Dorsolateral prefrontal cortex (tissue), 120 donors: ENCODE measurements at regions of chr1 and their contacts with region 1.

Region 1: GRCh38 chr1:150372580-150372979 is 8.6 kb downstream of the RPRD2 start:
- DNase-seq: no peak
- H3K4me3 ChIP-seq: no peak overlapping the region
- H3K27ac ChIP-seq: no peak overlapping the region
- H3K27me3 ChIP-seq: no peaks in the 10 kb centered on the region
- CTCF ChIP-seq: no peak

Region 2: DNA sequence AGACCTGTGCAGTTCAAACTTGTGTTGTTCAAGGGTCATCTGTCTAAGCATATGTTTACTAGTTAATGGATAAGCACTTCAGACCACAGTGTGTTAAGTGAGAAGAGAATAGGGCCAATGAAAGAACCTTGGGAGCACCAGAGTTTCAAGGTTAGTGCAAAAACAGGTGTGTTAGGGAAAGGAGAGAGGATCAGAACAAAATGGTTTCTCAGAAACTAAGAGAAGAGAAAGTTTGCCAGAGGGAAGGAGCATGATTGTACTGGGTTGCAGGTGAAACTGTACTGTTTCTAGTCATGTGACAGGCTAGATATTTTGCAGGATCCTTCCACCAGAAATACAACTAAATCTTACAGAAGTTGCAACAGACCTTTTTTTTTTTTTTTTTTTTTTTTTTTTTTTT is 14.6 kb after region 1 on chr1:
- intact Hi-C with region 1: no loop called
- DNase-seq: no peak
- H3K4me3 ChIP-seq: no peak overlapping the region
- H3K27ac ChIP-seq: no peak overlapping the region
- H3K27me3 ChIP-seq: no peaks in the 10 kb centered on the region
- CTCF ChIP-seq: no peak

Region 3: GRCh38 chr1:150409504-150410362 is 37.2 kb after region 1 on chr1:
- intact Hi-C with region 1: loop called in 1 of 2 experiments (anchors 5 kb)
- DNase-seq: no peak
- H3K4me3 ChIP-seq: no peak overlapping the region
- H3K27ac ChIP-seq: peak overlapping the region in 18 of 59 donors; percentile 1 to 60 (median 25)
- H3K27me3 ChIP-seq: no peaks in the 10 kb centered on the region
- CTCF ChIP-seq: no peak